CD4-positive, alpha-beta T cell (primary cell): ENCODE measurements at regions of chr6 and their contacts with region 1.

Region 1: DNA sequence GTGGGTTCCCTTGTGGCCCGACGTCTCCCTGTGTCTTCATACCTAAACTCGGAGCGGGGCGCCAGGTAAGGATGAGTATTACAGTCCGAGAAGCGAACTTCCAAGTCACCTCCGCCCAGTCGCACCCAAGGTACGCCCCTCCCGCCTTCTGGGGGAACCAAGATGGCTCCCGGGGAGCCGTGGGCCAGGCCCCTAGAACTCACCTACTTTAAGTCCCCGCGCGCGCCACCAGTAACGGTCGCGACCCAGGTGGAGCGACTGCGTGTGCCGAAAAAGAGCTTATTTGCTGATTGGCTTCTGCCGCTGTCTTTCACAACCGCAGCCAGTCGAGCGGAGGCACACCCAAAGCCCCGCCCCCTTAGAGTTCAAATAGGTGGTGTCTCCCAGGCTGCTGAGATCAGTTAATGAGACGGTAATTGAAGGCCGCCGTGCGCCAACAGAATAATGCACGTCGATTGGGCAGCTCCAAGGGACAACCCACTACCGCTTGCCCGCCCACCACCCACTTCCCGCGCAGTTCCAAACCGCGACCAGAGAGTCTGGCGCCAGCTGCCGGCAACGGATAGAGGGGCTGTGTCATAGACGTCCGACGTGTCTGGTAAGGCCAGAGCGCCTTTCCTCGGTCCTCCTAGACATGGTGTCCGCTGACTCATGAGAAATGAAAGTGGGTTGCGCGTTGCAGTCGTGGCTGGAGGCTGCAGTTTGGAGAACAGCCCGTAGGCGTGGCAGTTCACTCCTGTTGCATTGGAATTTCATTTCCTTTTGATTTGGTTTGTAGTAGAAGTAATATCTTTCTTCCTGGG is at the start of gene MDC1:
- DNase-seq: peak; percentile 96 to 100 (median 98)
- ATAC-seq: peak; percentile 73
- H3K4me3 ChIP-seq: peak within 1 kb of the TSS; percentile 81
- H3K4me3 Mint-ChIP-seq: peak within 1 kb of the TSS; percentile 95
- H3K27ac ChIP-seq: peak within 1 kb of the TSS; percentile 86 to 90
- H3K27ac Mint-ChIP-seq: peak within 1 kb of the TSS; percentile 96
- H3K4me1 ChIP-seq: peaks cover 42% of the 10 kb centered on the region
- H3K4me1 Mint-ChIP-seq: peaks cover 45% of the 10 kb centered on the region
- H3K27me3 ChIP-seq: no peaks in the 10 kb centered on the region
- H3K27me3 Mint-ChIP-seq: no peaks in the 10 kb centered on the region
- CTCF ChIP-seq: peak; percentile 45
- total RNA-seq, gene MDC1: 50.5 to 56.8 TPM

Region 2: DNA sequence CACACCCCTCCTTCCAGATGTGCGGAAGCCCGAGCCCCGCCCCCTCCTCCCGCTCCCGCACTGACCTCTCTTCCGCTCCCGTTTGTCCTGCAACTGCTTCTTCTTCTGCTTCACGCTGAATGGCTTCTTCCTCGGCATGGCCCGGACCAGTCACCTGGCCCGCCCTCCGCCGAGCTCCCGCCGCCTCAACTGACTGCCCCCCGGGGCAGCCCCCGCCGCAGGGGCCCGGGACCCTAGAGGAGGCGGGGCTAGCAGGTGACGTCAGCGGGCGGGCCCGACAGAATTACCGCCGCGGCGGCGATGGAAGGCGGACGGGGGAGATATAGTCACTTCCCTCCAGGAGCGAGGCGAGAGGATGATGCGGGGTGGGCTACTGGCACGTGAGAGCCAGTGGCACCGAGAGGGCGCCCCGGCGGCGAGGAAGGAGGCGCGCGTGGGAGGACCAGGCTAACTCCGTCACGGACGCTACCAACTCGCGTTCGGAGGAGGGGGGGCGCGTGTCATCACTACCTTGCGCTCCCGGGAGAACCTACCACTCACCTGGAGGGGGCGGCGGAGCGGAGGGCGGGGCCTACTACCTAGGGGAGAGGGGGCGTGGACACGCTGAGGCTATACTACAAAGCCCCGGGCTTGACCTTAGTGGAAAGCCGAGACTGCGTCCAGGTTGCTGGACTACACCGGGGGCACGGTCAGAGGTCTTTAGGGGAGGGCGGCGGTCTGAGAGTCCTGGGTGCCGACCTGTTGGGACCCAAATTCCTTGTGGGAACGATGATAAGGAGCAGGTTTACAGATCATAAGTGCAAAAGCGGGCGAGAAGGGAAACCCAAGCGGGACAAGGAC is 161.0 kb before region 1 on chr6 and contains the start of gene GNL1:
- CTCF ChIA-PET with region 1: no interaction called
- POLR2A ChIA-PET with region 1: interaction called, 12 read pairs
- intact Hi-C with region 1: loop called in 1 of 2 experiments (anchors 5 kb)
- DNase-seq: peak; percentile 98 to 100 (median 99)
- ATAC-seq: peak; percentile 88
- H3K4me3 ChIP-seq: peak within 1 kb of the TSS; percentile 86
- H3K4me3 Mint-ChIP-seq: peak within 1 kb of the TSS; percentile 98
- H3K27ac ChIP-seq: peak within 1 kb of the TSS; percentile 94 to 97
- H3K27ac Mint-ChIP-seq: peak within 1 kb of the TSS; percentile 97
- H3K4me1 ChIP-seq: peaks cover 27% of the 10 kb centered on the region
- H3K4me1 Mint-ChIP-seq: peaks cover 50% of the 10 kb centered on the region
- H3K27me3 ChIP-seq: no peaks in the 10 kb centered on the region
- H3K27me3 Mint-ChIP-seq: no peaks in the 10 kb centered on the region
- CTCF ChIP-seq: no peak
- total RNA-seq, gene GNL1: 145 to 151 TPM

Region 3: GRCh38 chr6:30626484-30627366 is 90.5 kb before region 1 on chr6 and contains the start of gene ATAT1:
- CTCF ChIA-PET with region 1: interaction called, 6 read pairs
- POLR2A ChIA-PET with region 1: no interaction called
- intact Hi-C with region 1: loop called in 1 of 2 experiments (anchors 2 kb)
- DNase-seq: peak; percentile 77 to 95 (median 86)
- ATAC-seq: peak; percentile 99
- H3K4me3 ChIP-seq: peak within 1 kb of the TSS; percentile 81
- H3K4me3 Mint-ChIP-seq: peak within 1 kb of the TSS; percentile 92
- H3K27ac ChIP-seq: peak within 1 kb of the TSS; percentile 68 to 91
- H3K27ac Mint-ChIP-seq: peak within 1 kb of the TSS; percentile 93
- H3K4me1 ChIP-seq: peaks cover 16% of the 10 kb centered on the region
- H3K4me1 Mint-ChIP-seq: peaks cover 20% of the 10 kb centered on the region
- H3K27me3 ChIP-seq: no peaks in the 10 kb centered on the region
- H3K27me3 Mint-ChIP-seq: no peaks in the 10 kb centered on the region
- CTCF ChIP-seq: peak; percentile 64
- total RNA-seq, gene ATAT1: 4.1 to 5.2 TPM

Region 4: GRCh38 chr6:30678964-30679726 is 38.1 kb before region 1 on chr6:
- CTCF ChIA-PET with region 1: interaction called, 526 read pairs
- POLR2A ChIA-PET with region 1: interaction called, 381 read pairs
- intact Hi-C with region 1: loop called (anchors 1 kb)
- DNase-seq: peak; percentile 84 to 96 (median 94)
- ATAC-seq: peak; percentile 41
- H3K4me3 ChIP-seq: peak overlapping the region; percentile 99
- H3K4me3 Mint-ChIP-seq: peak overlapping the region; percentile 98
- H3K27ac ChIP-seq: peak overlapping the region; percentile 41 to 98
- H3K27ac Mint-ChIP-seq: peak overlapping the region; percentile 94
- H3K4me1 ChIP-seq: peaks cover 49% of the 10 kb centered on the region
- H3K4me1 Mint-ChIP-seq: peaks cover 47% of the 10 kb centered on the region
- H3K27me3 ChIP-seq: no peaks in the 10 kb centered on the region
- H3K27me3 Mint-ChIP-seq: no peaks in the 10 kb centered on the region
- CTCF ChIP-seq: peak; percentile 91

Region 5: GRCh38 chr6:30730601-30731435 is 13.6 kb after region 1 on chr6:
- CTCF ChIA-PET with region 1: interaction called, 70 read pairs
- POLR2A ChIA-PET with region 1: interaction called, 54 read pairs
- intact Hi-C with region 1: loop called in 1 of 2 experiments (anchors 1 kb)
- DNase-seq: peak; percentile 74 to 92 (median 84)
- ATAC-seq: peak; percentile 99
- H3K4me3 ChIP-seq: peak overlapping the region; percentile 25
- H3K4me3 Mint-ChIP-seq: peak overlapping the region; percentile 50
- H3K27ac ChIP-seq: peak overlapping the region in 1 of 2 donors; percentile 14
- H3K27ac Mint-ChIP-seq: peak overlapping the region; percentile 67
- H3K4me1 ChIP-seq: peaks cover 36% of the 10 kb centered on the region
- H3K4me1 Mint-ChIP-seq: peaks cover 46% of the 10 kb centered on the region
- H3K27me3 ChIP-seq: no peaks in the 10 kb centered on the region
- H3K27me3 Mint-ChIP-seq: no peaks in the 10 kb centered on the region
- CTCF ChIP-seq: peak; percentile 84